ENCODE measurements at regions of chr16 and their contacts with region 1.

Region 1: GRCh38 chr16:68617734-68618133 is 27.4 kb upstream of the CDH3 start:
- DNase-seq: no peak
- H3K4me3 ChIP-seq: no peak overlapping the region
- H3K4me3 Mint-ChIP-seq: no peak overlapping the region
- H3K27ac Mint-ChIP-seq: no peak overlapping the region
- H3K4me1 ChIP-seq: no peaks in the 10 kb centered on the region
- H3K4me1 Mint-ChIP-seq: no peaks in the 10 kb centered on the region
- H3K27me3 ChIP-seq: no peaks in the 10 kb centered on the region
- H3K27me3 Mint-ChIP-seq: peaks cover 5% of the 10 kb centered on the region
- CTCF ChIP-seq: no peak

Region 2: GRCh38 chr16:68658258-68659008 is 40.7 kb after region 1 on chr16:
- CTCF ChIA-PET with region 1: no interaction called
- POLR2A ChIA-PET with region 1: interaction called, 10 read pairs
- intact Hi-C with region 1: no loop called
- DNase-seq: peak in 1 of 2 experiments; percentile 48
- H3K4me3 ChIP-seq: no peak overlapping the region
- H3K4me3 Mint-ChIP-seq: no peak overlapping the region
- H3K27ac Mint-ChIP-seq: no peak overlapping the region
- H3K4me1 ChIP-seq: no peaks in the 10 kb centered on the region
- H3K4me1 Mint-ChIP-seq: peaks cover 7% of the 10 kb centered on the region
- H3K27me3 ChIP-seq: no peaks in the 10 kb centered on the region
- H3K27me3 Mint-ChIP-seq: no peaks in the 10 kb centered on the region
- CTCF ChIP-seq: no peak

Measured in Caco-2 (cell line).